ENCODE measurements at regions of chr15 and their contacts with region 1.

Region 1: DNA sequence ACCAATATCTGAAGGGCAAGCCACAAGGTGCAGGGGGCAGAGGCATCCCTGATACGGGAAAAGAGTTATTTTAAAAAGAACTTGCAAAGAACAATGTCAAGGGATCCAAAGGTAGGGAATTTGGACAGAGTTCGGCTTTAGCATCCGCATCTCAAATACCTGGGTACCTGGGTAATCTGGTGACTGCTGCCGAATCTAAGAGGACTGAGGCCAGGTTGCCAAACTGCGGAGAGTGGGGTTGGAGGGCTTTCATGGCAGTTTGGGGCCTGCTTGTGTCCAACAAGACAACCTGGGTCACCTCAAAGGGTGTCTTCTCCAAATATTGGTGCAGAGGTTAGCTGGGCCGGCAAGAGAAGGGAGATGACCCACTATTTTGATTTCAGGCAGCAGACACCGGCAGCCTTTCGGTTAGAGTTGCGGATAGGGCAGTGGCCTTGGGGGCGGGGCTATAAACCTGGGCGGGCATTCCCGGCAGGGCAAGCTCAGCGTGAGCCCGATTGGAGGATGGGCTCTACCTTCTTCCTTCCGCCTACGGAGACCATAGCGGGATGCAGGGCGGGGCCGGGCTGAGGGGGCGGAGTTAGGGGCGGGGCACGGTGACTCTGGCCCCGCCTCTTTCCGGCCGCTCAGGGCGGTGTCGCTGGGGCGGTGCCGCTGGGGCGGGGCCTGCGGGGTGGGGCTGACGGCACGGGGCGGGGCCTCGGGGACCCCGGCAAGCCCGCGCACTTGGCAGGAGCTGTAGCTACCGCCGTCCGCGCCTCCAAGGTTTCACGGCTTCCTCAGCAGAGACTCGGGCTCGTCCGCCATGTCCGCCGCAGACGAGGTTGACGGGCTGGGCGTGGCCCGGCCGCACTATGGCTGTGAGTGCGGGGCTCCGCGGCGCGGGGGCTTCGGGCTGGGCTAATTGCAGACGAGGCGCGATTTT is at the start of gene IQGAP1:
- DNase-seq: peak; percentile 95
- H3K4me3 ChIP-seq: peak within 1 kb of the TSS; percentile 74 to 97 (median 95)
- H3K27ac ChIP-seq: peak within 1 kb of the TSS; percentile 88
- H3K4me1 ChIP-seq: peaks cover 30% of the 10 kb centered on the region
- H3K27me3 ChIP-seq: no peaks in the 10 kb centered on the region
- CTCF ChIP-seq: no peak
- POLR2A ChIP-seq: peak; percentile 91
- total RNA-seq, gene IQGAP1: 244 and 258 TPM in 2 replicates

Region 2: DNA sequence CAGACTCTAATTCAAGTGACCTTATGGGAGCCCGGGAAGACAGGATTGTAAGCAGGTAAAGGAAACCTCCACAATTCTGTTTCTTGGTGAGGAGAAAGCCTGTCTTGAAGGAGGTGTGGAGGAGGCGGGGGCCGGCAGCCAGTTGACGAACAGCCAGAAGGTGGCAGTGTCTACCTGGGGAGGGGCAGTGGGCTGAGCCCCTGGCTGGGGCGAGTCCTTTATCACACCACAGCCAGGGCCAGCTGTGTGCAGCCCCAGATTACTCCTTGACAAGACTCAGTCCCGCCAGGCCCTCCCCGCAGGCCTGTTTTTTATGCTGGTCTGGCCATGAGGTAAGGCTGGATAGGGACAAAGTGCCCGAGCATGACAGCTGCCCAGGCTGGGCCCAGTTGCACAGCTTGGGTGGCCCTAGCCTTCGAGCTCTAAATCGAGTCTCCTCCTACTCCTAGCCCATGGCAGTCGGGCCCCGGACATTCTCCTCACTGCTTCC is 244.6 kb before region 1 on chr15:
- CTCF ChIA-PET with region 1: no interaction called
- POLR2A ChIA-PET with region 1: no interaction called
- dilution Hi-C with region 1: no loop called
- intact Hi-C with region 1: no loop called
- DNase-seq: peak; percentile 60
- H3K4me3 ChIP-seq: no peak overlapping the region
- H3K27ac ChIP-seq: no peak overlapping the region
- H3K4me1 ChIP-seq: peaks cover 2% of the 10 kb centered on the region
- H3K27me3 ChIP-seq: no peaks in the 10 kb centered on the region
- CTCF ChIP-seq: peak; percentile 53 to 75
- POLR2A ChIP-seq: no peak

Region 3: DNA sequence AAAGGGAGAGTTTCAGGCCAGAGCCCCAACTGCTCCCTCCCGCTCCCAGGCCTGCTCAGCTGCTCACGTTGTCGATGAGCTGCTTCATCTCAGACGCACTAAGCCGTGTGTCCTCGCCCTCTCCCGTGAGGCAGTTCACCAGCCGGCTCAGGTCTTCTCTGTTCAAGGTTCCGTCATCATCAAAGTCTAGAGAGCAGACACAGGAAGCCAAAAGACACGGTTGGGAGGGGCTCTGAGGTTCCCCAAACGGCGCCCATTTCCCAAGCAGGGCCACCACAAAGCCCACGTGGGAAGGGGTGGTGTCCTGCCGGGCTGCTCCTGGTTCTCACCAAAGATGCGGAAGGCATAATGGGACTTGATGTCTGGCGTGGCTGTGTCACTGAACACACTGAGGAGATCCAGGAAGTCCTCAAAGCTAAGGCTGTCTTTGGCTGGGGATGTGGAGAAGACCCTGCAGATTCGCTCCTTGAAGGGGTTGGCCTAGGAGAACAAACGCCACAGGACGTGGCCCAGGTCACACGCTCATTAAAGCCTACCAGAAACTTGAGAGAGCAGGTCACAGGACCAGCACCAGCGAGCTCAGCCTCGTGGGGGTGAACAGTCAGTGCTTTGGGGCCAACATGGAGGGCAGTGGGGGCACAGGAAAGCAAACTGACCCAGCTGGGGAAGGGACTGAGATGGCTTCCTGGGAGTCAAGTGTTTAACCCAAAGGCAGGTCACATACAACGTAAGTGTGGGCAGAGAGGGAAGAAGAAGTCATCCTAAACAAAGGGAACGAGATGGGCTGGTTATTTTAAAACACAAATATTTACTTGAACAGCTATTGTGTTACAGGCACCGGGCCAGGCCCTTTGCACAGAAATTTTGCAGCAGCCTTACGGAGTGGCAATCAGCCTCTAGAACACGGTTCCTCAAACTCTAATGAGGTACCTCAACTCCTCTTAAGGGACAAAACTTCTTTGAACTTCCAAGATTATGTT is 156.5 kb before region 1 on chr15:
- CTCF ChIA-PET with region 1: no interaction called
- POLR2A ChIA-PET with region 1: no interaction called
- dilution Hi-C with region 1: no loop called
- intact Hi-C with region 1: no loop called
- DNase-seq: no peak
- H3K4me3 ChIP-seq: no peak overlapping the region
- H3K27ac ChIP-seq: no peak overlapping the region
- H3K4me1 ChIP-seq: peaks cover 18% of the 10 kb centered on the region
- H3K27me3 ChIP-seq: no peaks in the 10 kb centered on the region
- CTCF ChIP-seq: no peak
- POLR2A ChIP-seq: no peak

Region 4: DNA sequence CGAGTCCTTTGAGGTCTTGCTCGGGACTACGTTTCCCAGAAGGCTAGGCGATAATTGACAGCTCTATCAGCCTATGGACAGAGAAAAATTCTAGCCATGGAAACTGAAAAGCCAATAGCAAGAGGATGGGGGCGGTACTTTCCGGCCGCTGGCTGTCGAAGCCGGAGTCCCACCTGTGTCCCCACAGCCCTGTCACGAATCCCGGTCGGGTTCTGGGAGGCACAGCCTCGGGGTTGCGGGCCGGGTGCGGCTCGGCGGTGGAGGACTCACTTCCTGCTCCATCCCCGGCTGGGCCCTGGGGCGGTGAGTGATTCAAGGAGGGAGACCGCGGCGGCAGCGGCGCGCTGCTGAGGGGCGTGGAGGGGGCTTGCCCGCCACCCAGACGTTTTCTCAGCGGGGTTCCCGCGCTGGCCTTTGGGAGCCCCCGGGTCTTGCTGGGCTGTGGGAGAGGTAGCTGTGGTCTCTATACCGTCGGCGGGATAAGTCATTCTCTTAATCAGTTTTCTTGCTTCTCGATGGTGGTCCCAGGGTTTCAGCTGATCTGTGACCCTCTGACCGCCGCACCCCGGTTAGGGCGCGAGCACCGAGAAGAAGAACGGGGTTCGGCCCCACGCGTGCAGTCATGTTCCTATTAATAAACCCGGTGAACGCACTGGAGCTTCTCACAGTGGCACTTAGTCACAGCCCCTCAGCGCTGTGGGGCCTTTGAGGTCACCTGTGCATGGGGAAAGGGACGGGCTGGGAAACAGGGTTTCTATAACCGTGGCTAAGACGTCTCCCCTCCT is 35.5 kb before region 1 on chr15 and contains the start of gene ZNF774:
- CTCF ChIA-PET with region 1: no interaction called
- POLR2A ChIA-PET with region 1: interaction called, 3 read pairs
- dilution Hi-C with region 1: no loop called
- intact Hi-C with region 1: loop called (anchors 2 kb)
- DNase-seq: peak; percentile 96
- H3K4me3 ChIP-seq: peak within 1 kb of the TSS; percentile 55 to 90 (median 61)
- H3K27ac ChIP-seq: no peak within 1 kb of the TSS
- H3K4me1 ChIP-seq: peaks cover 5% of the 10 kb centered on the region
- H3K27me3 ChIP-seq: no peaks in the 10 kb centered on the region
- CTCF ChIP-seq: no peak
- POLR2A ChIP-seq: no peak
- total RNA-seq, gene ZNF774: 2.6 and 3.9 TPM in 2 replicates

Region 5: DNA sequence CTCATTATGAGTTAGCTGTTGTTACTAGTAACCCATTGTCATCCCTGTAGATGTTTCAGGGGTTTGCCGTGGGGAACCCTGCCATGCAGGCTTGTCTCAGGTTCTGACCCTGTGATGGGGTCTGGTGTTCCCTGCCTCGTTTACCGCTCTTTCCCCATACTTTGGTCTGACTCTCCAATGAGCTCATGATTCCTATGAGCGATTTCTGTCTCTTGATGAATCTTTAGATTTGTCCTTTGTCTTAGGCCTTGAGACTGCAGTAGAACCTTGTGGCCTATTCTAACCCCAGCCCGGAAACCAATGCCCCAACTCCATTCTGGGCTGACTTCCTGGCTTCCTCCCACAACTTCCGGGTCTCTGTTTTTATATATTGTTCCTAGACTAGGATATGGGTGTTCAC is 11.0 kb before region 1 on chr15:
- CTCF ChIA-PET with region 1: interaction called, 8 read pairs
- POLR2A ChIA-PET with region 1: interaction called, 6 read pairs
- dilution Hi-C with region 1: no loop called
- intact Hi-C with region 1: loop called (anchors 1 kb)
- DNase-seq: peak; percentile 72
- H3K4me3 ChIP-seq: no peak overlapping the region
- H3K27ac ChIP-seq: peak overlapping the region; percentile 56
- H3K4me1 ChIP-seq: peaks cover 18% of the 10 kb centered on the region
- H3K27me3 ChIP-seq: no peaks in the 10 kb centered on the region
- CTCF ChIP-seq: no peak
- POLR2A ChIP-seq: no peak

Region 6: DNA sequence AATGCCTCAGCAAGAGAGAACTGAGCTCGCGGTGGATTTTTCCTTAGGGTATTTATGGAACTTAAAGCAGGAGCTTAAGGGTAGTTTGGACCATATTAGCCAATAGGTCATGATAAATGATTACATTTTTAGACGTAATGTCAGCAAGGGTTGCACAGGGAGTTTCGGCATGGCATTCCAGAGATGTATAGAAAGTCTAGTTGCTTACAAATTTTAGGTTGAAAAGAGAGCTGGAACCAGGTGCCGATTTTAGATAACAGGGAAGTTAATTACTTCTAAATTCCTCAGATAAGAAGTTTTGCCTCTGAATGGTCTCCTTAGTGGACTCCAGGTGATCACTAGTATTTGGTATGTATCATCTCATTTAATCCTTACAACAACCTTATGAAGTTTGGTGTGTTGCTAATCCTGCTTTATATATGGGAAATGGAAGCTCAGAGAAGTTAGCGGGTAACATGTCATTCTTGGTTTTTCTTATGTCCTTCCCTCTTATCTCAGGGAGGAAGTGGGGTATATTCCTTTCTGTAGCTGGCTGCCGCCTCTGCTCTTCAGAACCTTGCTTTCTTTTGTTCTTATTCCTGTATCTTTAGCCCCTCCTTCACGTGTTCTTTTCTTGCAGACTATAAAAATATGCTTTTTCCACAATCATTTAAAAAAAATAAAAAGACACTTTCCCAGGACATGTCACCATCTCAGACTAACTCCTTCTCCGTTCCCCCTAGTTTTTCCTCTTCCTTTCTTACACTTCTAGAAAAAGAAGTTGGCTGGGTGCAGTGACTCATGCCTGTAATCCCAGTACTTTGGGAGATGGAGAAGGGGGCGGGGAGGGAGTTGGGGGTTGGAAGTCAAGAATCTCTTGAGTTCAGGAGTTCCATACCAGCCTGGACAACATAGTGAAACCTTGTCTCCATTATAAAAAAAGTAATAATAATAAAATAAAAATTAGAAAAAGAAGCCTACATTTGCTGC is 25.9 kb after region 1 on chr15:
- CTCF ChIA-PET with region 1: interaction called, 5 read pairs
- POLR2A ChIA-PET with region 1: interaction called, 6 read pairs
- dilution Hi-C with region 1: no loop called
- intact Hi-C with region 1: loop called (anchors 2 kb)
- DNase-seq: peak; percentile 54
- H3K4me3 ChIP-seq: peak overlapping the region in 1 of 3 experiments; percentile 34
- H3K27ac ChIP-seq: peak overlapping the region; percentile 33
- H3K4me1 ChIP-seq: peaks cover 40% of the 10 kb centered on the region
- H3K27me3 ChIP-seq: no peaks in the 10 kb centered on the region
- CTCF ChIP-seq: no peak
- POLR2A ChIP-seq: no peak

Region 7: GRCh38 chr15:90436952-90437351 is 49.2 kb after region 1 on chr15:
- CTCF ChIA-PET with region 1: interaction called, 10 read pairs
- POLR2A ChIA-PET with region 1: no interaction called
- dilution Hi-C with region 1: no loop called
- intact Hi-C with region 1: loop called (anchors 1 kb)
- DNase-seq: no peak
- H3K4me3 ChIP-seq: no peak overlapping the region
- H3K27ac ChIP-seq: no peak overlapping the region
- H3K4me1 ChIP-seq: peaks cover 50% of the 10 kb centered on the region
- H3K27me3 ChIP-seq: no peaks in the 10 kb centered on the region
- CTCF ChIP-seq: no peak
- POLR2A ChIP-seq: no peak

Region 8: GRCh38 chr15:90482124-90483011 is 94.6 kb after region 1 on chr15:
- CTCF ChIA-PET with region 1: interaction called, 16 read pairs
- POLR2A ChIA-PET with region 1: interaction called, 3 read pairs
- dilution Hi-C with region 1: no loop called
- intact Hi-C with region 1: no loop called
- DNase-seq: peak; percentile 78
- H3K4me3 ChIP-seq: no peak overlapping the region
- H3K27ac ChIP-seq: no peak overlapping the region
- H3K4me1 ChIP-seq: peaks cover 11% of the 10 kb centered on the region
- H3K27me3 ChIP-seq: no peaks in the 10 kb centered on the region
- CTCF ChIP-seq: peak; percentile 47 to 67
- POLR2A ChIP-seq: no peak